ENCODE measurements at regions of chr1 and their contacts with region 1.

Region 1: DNA sequence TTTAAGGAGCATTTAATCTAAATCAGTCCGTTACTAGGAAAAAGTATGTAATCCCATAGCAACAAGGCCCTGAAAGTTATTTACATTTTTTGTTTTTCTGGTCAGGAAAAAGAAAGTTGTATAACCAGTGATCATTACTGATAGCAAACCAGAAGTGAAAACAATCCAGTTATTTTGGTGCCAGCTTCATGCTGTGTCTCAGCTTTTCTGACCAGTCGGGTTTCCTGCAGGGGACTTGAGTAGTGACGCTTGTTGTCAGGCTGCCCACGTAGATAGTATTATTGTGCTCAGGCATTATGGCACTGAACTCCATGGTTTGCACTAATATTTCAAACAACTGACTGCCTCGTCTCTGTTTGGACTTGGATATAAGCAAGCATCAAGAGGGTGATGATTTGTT is 55.2 kb downstream of the SASS6 start:
- DNase-seq: peak; percentile 72
- ATAC-seq: peak; percentile 79
- H3K4me3 ChIP-seq: peak overlapping the region; percentile 46; the same call in 1 of the 2 replicates
- H3K27ac ChIP-seq: peak overlapping the region; percentile 92
- H3K4me1 ChIP-seq: peaks cover 29% of the 10 kb centered on the region
- H3K27me3 ChIP-seq: no peaks in the 10 kb centered on the region
- CTCF ChIP-seq: no peak
- EP300 ChIP-seq: peak; percentile 63 to 65; a peak in 3 of 4 replicates
- POLR2A ChIP-seq: 0 out of 2 replicates have a peak, but pooled peaks have one; percentile 20
- RAD21 ChIP-seq: no peak

Region 2: GRCh38 chr1:99891997-99892396 is 185.5 kb before region 1 on chr1:
- CTCF ChIA-PET with region 1: no interaction called
- POLR2A ChIA-PET with region 1: no interaction called
- RAD21 ChIA-PET with region 1: no interaction called
- SMC1A ChIA-PET with region 1: no interaction called
- in situ Hi-C with region 1: no loop called
- intact Hi-C with region 1: no loop called
- DNase-seq: no peak
- ATAC-seq: no peak
- H3K4me3 ChIP-seq: no peak overlapping the region
- H3K27ac ChIP-seq: no peak overlapping the region
- H3K4me1 ChIP-seq: no peaks in the 10 kb centered on the region
- H3K27me3 ChIP-seq: no peaks in the 10 kb centered on the region
- CTCF ChIP-seq: no peak
- EP300 ChIP-seq: no peak
- POLR2A ChIP-seq: no peak
- RAD21 ChIP-seq: no peak

Region 3: GRCh38 chr1:99969729-99970621 is 107.6 kb before region 1 on chr1 and contains the start of gene SLC35A3:
- CTCF ChIA-PET with region 1: no interaction called
- POLR2A ChIA-PET with region 1: no interaction called
- RAD21 ChIA-PET with region 1: interaction called, 3 read pairs
- SMC1A ChIA-PET with region 1: interaction called, 3 read pairs
- in situ Hi-C with region 1: no loop called
- intact Hi-C with region 1: loop called (anchors 2 kb)
- DNase-seq: peak; percentile 41
- ATAC-seq: peak; percentile 95
- H3K4me3 ChIP-seq: peak within 1 kb of the TSS; percentile 92
- H3K27ac ChIP-seq: peak within 1 kb of the TSS; percentile 68
- H3K4me1 ChIP-seq: no peaks in the 10 kb centered on the region
- H3K27me3 ChIP-seq: no peaks in the 10 kb centered on the region
- CTCF ChIP-seq: no peak
- EP300 ChIP-seq: no peak
- POLR2A ChIP-seq: peak; percentile 94
- RAD21 ChIP-seq: no peak
- polyA plus RNA-seq, gene SLC35A3: 3.6 to 4.9 TPM

Region 4: GRCh38 chr1:99992760-99993467 is 84.6 kb before region 1 on chr1:
- CTCF ChIA-PET with region 1: no interaction called
- POLR2A ChIA-PET with region 1: no interaction called
- RAD21 ChIA-PET with region 1: no interaction called
- SMC1A ChIA-PET with region 1: no interaction called
- in situ Hi-C with region 1: no loop called
- intact Hi-C with region 1: no loop called
- DNase-seq: peak; percentile 15
- ATAC-seq: peak; percentile 81
- H3K4me3 ChIP-seq: no peak overlapping the region
- H3K27ac ChIP-seq: no peak overlapping the region
- H3K4me1 ChIP-seq: no peaks in the 10 kb centered on the region
- H3K27me3 ChIP-seq: no peaks in the 10 kb centered on the region
- CTCF ChIP-seq: no peak
- EP300 ChIP-seq: no peak
- POLR2A ChIP-seq: no peak
- RAD21 ChIP-seq: no peak

Region 5: GRCh38 chr1:100051401-100051800 is 26.1 kb before region 1 on chr1:
- CTCF ChIA-PET with region 1: interaction called, 6 read pairs
- POLR2A ChIA-PET with region 1: interaction called, 20 read pairs
- RAD21 ChIA-PET with region 1: interaction called, 19 read pairs
- SMC1A ChIA-PET with region 1: interaction called, 56 read pairs
- in situ Hi-C with region 1: no loop called
- intact Hi-C with region 1: loop called (anchors 2 kb)
- DNase-seq: no peak
- ATAC-seq: no peak
- H3K4me3 ChIP-seq: no peak overlapping the region
- H3K27ac ChIP-seq: no peak overlapping the region
- H3K4me1 ChIP-seq: peaks cover 13% of the 10 kb centered on the region
- H3K27me3 ChIP-seq: no peaks in the 10 kb centered on the region
- CTCF ChIP-seq: no peak
- EP300 ChIP-seq: no peak
- POLR2A ChIP-seq: no peak
- RAD21 ChIP-seq: no peak

Region 6: GRCh38 chr1:100132566-100133477 is 55.3 kb after region 1 on chr1 and contains the starts of genes SASS6 and TRMT13:
- CTCF ChIA-PET with region 1: no interaction called
- POLR2A ChIA-PET with region 1: interaction called, 4 read pairs
- RAD21 ChIA-PET with region 1: interaction called, 3 read pairs
- SMC1A ChIA-PET with region 1: interaction called, 5 read pairs
- in situ Hi-C with region 1: no loop called
- intact Hi-C with region 1: loop called (anchors 2 kb)
- DNase-seq: peak; percentile 90
- ATAC-seq: peak; percentile 91
- H3K4me3 ChIP-seq: peak within 1 kb of the TSS; percentile 99
- H3K27ac ChIP-seq: peak within 1 kb of the TSS; percentile 83
- H3K4me1 ChIP-seq: peaks cover 11% of the 10 kb centered on the region
- H3K27me3 ChIP-seq: no peaks in the 10 kb centered on the region
- CTCF ChIP-seq: no peak
- EP300 ChIP-seq: peak in 1 of 2 experiments; percentile 43; a peak in 1 of 4 replicates
- POLR2A ChIP-seq: peak; percentile 80
- RAD21 ChIP-seq: no peak
- polyA plus RNA-seq, gene SASS6: 8.2 to 10.7 TPM
- polyA plus RNA-seq, gene TRMT13: 17.1 to 22.3 TPM